PC-9 (cell line): ENCODE measurements at regions of chr4 and their contacts with region 1.

Region 1: DNA sequence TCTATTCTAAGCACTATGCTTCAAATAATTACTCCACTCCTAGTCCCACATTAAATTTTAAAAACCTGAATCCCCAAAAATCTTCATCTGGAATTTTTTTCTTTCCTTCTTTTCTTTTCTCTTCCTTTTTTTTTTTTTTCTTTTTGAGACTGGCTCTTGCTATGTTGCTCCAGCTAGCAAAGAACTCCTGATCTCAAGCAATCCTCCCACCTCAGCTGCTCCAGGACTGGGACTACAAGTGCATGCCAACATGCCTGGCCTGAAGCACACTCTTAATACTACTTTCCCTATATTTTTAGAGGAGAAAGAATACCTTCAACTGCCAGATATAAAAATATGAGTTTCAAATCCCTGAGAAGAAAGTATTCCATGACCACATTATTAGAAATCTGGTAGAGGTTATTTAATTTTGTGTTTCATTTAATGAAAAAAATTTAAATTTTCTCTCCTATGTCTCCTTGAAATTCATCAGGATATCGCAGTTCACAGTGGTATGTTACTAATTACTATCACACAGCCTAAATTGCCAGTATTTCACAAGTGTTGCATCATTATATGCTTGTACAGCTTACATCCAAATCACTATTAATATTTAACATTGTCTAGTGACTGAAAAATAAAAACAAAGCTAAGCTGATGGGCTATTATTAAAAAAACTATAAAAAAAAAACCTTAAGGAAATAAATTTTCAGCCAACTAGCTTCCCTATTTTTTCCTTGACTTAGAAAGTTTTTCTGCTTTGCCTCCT is 227.8 kb downstream of the NAF1 start:
- DNase-seq: no peak
- H3K4me3 ChIP-seq: no peak overlapping the region
- H3K27ac ChIP-seq: no peak overlapping the region
- H3K4me1 ChIP-seq: no peaks in the 10 kb centered on the region
- H3K27me3 ChIP-seq: no peaks in the 10 kb centered on the region
- CTCF ChIP-seq: no peak

Region 2: GRCh38 chr4:162972661-162973330 is 33.9 kb after region 1 on chr4:
- CTCF ChIA-PET with region 1: no interaction called
- POLR2A ChIA-PET with region 1: no interaction called
- intact Hi-C with region 1: loop called (anchors 1 kb)
- DNase-seq: no peak
- H3K4me3 ChIP-seq: no peak overlapping the region
- H3K27ac ChIP-seq: no peak overlapping the region
- H3K4me1 ChIP-seq: no peaks in the 10 kb centered on the region
- H3K27me3 ChIP-seq: no peaks in the 10 kb centered on the region
- CTCF ChIP-seq: no peak

Region 3: DNA sequence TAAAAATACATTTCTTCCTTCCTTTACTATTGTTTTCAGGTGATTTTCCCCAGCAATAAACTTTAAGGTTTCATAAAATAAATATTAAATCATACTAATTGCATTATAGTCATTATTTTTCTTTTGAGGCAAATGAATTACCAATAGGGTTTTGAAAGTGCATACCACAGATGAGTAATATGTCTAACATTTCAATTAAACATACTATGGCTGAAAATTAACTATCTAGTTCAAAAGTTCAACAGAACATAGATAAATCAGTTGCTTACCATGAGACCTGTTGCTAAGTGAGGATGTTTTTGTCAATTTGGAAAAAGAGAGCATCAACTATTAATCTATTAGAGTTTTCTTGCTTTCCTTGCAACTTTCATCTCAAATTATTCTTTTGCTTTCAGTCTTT is 439.7 kb after region 1 on chr4:
- CTCF ChIA-PET with region 1: no interaction called
- POLR2A ChIA-PET with region 1: no interaction called
- intact Hi-C with region 1: no loop called
- DNase-seq: no peak
- H3K4me3 ChIP-seq: no peak overlapping the region
- H3K27ac ChIP-seq: no peak overlapping the region
- H3K4me1 ChIP-seq: no peaks in the 10 kb centered on the region
- H3K27me3 ChIP-seq: no peaks in the 10 kb centered on the region
- CTCF ChIP-seq: no peak